Adrenal gland (tissue), 19 donors: ENCODE measurements at regions of chr10 and their contacts with region 1.

Region 1: DNA sequence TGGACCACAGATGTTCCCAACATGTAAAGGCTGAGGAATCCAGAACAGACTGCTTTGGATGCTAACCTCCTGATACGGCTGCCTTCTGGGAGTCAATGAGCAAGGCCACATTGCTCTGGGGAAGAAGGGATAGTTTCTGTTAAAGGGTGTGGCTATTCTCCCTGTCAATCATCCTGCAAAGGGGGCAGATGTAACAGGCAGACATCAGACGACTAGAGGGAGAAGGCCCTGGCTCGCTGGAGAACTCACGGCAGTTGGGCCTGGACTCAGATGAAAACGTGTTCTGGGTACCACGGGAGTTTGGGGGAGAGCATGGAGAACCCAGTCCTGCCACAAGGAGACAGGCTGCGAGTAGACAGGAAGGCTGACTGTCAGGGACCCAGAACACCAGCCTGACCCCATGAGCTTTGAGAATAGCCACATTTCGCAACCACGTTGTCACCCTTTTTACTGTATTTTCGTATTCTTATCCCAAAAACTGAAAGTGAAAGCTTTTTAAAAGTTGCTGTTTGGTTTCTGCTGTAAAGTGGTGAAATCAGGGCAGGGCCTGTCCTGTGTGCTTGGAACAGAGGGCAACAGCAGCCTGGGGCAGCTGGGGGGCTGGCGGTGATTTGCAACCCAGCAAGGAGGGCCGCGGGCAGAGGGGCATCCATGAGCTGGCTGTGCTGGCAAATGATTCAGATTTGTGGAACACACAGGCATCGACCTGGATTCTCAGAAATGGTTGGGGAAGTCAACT is 95.3 kb downstream of the MYOF start:
- DNase-seq: peak in 4 of 7 donors; percentile 20 to 66 (median 33)
- H3K4me3 ChIP-seq: no peak overlapping the region
- H3K27ac ChIP-seq: peak overlapping the region in 1 of 5 donors; percentile 62
- H3K4me1 ChIP-seq: peaks cover 0 to 7% of the 10 kb centered on the region in 2 donors
- H3K27me3 ChIP-seq: no peaks in the 10 kb centered on the region
- CTCF ChIP-seq: peak in 3 of 6 experiments; percentile 12 to 35 (median 26)
- POLR2A ChIP-seq: no peak

Region 2: DNA sequence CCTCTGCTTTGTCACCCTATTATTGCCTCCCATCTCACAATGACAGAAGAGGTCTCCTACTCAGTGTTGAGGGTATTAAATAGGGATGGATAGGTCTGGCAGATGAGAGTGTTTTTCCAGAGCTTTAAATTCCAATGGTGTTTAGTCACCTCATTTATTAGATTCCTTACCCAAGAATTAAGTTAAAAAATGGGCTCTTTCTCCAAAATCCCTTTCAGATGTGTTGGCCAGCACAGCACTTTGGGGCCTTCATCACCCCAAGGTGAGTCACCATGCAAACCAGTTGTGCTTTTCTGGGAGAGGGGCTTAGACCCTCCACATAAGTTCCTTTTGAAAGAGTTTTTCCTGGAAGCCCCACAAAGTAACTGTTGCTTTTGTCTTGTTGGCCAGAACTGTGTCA is 234.7 kb before region 1 on chr10:
- intact Hi-C with region 1: no loop called
- DNase-seq: no peak
- H3K4me3 ChIP-seq: no peak overlapping the region
- H3K27ac ChIP-seq: no peak overlapping the region
- H3K4me1 ChIP-seq: no peaks in the 10 kb centered on the region
- H3K27me3 ChIP-seq: no peaks in the 10 kb centered on the region
- CTCF ChIP-seq: no peak
- POLR2A ChIP-seq: no peak

Region 3: DNA sequence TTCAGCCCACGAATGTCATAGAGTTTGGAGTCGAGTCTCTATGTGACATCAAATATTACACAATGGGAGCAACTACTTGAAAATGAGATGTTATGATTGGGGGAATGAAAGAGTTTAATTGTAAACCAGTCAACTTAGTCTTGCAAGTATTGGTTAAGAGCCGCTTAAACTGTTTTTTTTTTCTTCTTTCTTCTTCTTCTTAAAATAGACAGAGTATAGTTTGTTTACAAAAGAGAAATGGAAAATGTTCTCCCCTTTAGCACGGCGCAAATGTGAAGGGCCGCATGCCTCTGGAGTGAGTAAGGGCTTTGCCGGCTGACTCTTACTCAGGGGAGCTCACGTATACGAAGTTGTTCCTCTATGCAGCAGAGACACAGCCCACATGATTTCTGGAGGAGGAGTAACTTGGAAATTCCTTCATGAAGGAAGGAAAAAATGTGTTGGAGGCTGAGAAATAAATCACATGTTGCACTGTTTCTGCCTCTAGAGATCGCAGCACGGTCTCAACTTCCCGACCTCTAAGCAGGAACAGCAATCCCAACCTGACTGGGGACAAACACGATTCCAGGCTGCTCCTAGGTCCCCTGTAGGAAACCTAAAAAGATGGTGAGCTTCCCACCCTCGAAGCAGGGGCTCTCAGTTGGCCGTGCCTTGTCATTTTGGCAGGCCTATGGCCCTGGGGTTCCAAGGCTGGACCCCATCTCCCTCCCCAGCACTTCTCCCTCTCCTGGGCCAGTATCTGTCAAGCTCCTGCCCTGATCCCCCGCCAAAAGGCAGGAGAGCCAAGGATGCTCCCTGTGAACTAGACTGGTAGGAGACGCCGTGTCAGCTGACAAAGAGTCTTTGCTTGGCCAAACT is 50.5 kb after region 1 on chr10:
- intact Hi-C with region 1: loop called in 1 of 2 experiments (anchors 10 kb)
- DNase-seq: peak; percentile 59 to 90 (median 84)
- H3K4me3 ChIP-seq: peak overlapping the region in 1 of 4 donors; percentile 19
- H3K27ac ChIP-seq: peak overlapping the region; percentile 89 to 99 (median 91)
- H3K4me1 ChIP-seq: peaks cover 22 to 58% of the 10 kb centered on the region in 2 donors
- H3K27me3 ChIP-seq: no peaks in the 10 kb centered on the region
- CTCF ChIP-seq: no peak
- POLR2A ChIP-seq: peak in 1 of 2 donors; percentile 78